Heart right ventricle (tissue), 16 donors: ENCODE measurements at regions of chr2 and their contacts with region 1.

Region 1: GRCh38 chr2:62794791-62795190 is 89.3 kb downstream of the EHBP1 start:
- DNase-seq: no peak
- ATAC-seq: no peak
- H3K4me3 ChIP-seq: no peak overlapping the region
- H3K27ac ChIP-seq: no peak overlapping the region
- H3K4me1 ChIP-seq: peaks cover 0 to 20% (median 6%) of the 10 kb centered on the region in 9 donors
- H3K27me3 ChIP-seq: no peaks in the 10 kb centered on the region
- CTCF ChIP-seq: no peak

Region 2: GRCh38 chr2:62672601-62673000 is 122.2 kb before region 1 on chr2:
- intact Hi-C with region 1: no loop called
- DNase-seq: no peak
- ATAC-seq: peak in 6 of 8 donors; percentile 48 to 81 (median 64)
- H3K4me3 ChIP-seq: no peak overlapping the region
- H3K27ac ChIP-seq: no peak overlapping the region
- H3K4me1 ChIP-seq: peaks cover 0 to 15% (median 8%) of the 10 kb centered on the region in 9 donors
- H3K27me3 ChIP-seq: no peaks in the 10 kb centered on the region
- CTCF ChIP-seq: no peak

Region 3: DNA sequence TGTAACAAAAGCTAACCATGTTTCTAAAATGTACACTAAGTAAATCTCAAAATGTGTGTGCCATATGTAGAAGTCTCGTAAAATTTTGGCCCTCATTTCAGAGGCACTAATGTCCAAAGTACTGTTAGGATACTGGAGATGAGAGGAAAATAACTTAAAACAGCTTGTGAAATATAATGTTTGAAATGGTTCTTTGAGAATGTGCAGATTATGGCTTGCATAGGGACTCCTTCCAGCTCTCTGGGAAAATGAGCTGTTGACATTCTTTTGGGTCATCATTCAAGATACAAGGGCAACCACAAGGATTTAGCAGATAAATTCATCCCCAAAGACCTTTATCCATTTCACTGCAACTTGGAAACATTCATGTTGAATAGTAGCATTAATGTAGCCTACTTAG is 217.8 kb after region 1 on chr2:
- intact Hi-C with region 1: loop called in 1 of 10 experiments (anchors 10 kb)
- DNase-seq: no peak
- ATAC-seq: no peak
- H3K4me3 ChIP-seq: no peak overlapping the region
- H3K27ac ChIP-seq: no peak overlapping the region
- H3K4me1 ChIP-seq: peaks cover 0 to 6% (median 0%) of the 10 kb centered on the region in 9 donors
- H3K27me3 ChIP-seq: no peaks in the 10 kb centered on the region
- CTCF ChIP-seq: no peak

Region 4: DNA sequence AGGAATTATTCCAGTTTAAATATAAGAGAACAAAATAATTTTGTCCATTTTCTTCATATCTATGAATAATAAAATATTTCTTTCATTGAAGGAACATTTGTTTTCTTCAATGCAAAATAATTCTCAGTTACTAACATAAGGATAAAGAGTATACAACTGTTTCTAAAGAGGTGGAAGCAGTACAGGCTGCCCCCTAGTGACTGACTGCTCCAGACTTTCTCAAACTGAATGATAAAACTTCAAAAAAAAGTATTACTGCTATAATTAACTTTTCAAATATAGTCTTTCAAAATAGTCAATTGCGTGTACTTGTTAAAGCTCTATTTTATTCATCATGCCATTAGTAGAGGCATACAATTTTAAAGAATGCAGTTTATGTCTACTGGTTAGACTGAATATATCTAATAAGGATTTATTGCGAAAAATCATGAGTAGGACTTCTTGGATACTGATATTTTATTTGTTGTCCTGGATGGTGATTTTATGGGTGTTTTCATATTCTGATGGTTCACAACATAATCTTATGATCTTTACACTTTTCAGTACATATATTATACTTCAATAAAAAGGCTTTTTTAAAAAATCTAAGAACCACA is 693.4 kb after region 1 on chr2:
- intact Hi-C with region 1: loop called in 3 of 10 experiments (anchors 1 to 10 kb)
- DNase-seq: peak in 1 of 2 donors; percentile 5
- ATAC-seq: no peak
- H3K4me3 ChIP-seq: no peak overlapping the region
- H3K27ac ChIP-seq: no peak overlapping the region
- H3K4me1 ChIP-seq: peaks cover 0 to 6% (median 0%) of the 10 kb centered on the region in 9 donors
- H3K27me3 ChIP-seq: no peaks in the 10 kb centered on the region
- CTCF ChIP-seq: peak in 8 of 9 donors; percentile 28 to 76 (median 62)